H1 (cell line): ENCODE measurements at regions of chr10 and their contacts with region 1.

Region 1: GRCh38 chr10:69800109-69800508 is 1.6 kb upstream of the COL13A1 start:
- DNase-seq: peak in 1 of 2 experiments; percentile 74
- H3K4me3 ChIP-seq: no peak overlapping the region
- H3K27ac ChIP-seq: no peak overlapping the region
- H3K4me1 ChIP-seq: peaks cover 0 to 8% (median 4%) of the 10 kb centered on the region in 4 experiments; a peak in 4 of 7 replicates
- H3K27me3 ChIP-seq: peaks cover 10 to 34% (median 24%) of the 10 kb centered on the region in 4 experiments; a peak in 6 of 7 replicates
- CTCF ChIP-seq: peak; percentile 48 to 90 (median 76)
- EP300 ChIP-seq: no peak
- POLR2A ChIP-seq: no peak
- RAD21 ChIP-seq: peak; percentile 61 to 74

Region 2: DNA sequence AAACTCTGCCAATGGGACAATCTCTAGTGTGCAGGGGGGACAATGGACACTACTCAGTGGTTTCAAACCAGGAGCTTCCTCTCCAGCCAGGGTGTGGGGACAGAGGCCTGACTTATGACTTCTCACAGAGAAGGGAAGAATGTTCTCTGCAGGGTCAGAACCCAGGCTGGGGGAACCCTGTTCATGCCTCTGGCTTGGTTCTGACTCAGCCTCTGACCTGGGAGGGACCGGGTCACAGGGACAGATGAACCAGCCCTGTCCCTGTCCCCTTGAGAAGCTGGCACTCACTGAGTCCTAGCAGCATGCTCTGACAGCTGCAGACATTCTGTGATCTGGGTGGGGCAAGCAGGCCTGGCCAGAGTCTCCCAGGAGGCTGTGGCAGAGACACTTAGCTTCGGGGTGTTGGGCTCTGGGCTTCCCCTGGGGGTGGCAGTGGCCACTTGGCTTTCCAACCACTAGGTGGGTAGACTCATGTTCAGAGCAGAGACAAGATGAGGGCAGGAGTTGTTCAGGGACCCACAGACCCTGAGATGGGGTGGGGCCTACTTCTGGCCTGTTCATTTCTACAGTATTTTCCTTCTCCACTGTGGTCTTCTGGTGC is 335.2 kb before region 1 on chr10:
- CTCF ChIA-PET with region 1: no interaction called
- POLR2A ChIA-PET with region 1: no interaction called
- DNase-seq: no peak
- H3K4me3 ChIP-seq: no peak overlapping the region
- H3K27ac ChIP-seq: no peak overlapping the region
- H3K4me1 ChIP-seq: peaks cover 0 to 5% (median 0%) of the 10 kb centered on the region in 4 experiments; a peak in 3 of 7 replicates
- H3K27me3 ChIP-seq: no peaks in the 10 kb centered on the region
- CTCF ChIP-seq: peak in 1 of 3 experiments; percentile 5; a peak in 1 of 4 replicates
- EP300 ChIP-seq: no peak
- POLR2A ChIP-seq: no peak
- RAD21 ChIP-seq: no peak

Region 3: DNA sequence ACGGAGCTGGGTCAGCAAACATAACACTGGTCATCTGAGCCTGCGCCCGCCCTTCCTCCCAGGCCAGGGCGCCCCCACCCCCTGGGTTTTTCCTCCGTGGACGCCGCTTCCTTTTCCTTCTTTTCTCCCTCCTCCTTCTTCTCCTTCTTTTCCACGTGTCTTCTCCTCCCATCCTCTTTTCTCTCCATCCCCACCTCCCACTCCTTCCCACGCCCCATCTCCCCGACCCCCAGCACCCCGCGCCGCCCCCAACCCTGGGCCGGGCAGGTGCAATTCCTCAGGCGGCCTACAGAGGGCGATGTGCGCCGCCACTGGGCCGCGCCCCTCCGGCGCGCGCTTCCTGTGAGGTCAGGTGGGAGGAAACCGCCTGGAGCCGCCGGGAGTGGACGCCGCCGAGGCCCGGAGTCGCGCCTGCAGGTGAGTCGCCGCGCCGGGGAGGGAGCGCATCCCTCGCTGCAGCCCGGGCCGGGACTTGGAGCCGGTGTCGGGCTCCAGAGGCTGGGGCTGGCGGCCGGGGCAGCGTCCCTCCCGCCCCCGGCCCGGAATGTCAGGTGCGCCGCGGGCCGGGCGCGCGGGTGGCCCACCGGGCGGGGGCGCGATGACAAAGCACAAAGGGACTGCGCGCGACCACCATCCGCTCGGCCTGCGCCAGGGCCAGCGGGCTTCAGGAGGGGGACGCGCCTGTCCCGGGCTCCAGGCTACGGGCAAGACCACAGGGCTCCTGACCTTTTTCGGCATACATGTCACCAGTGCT is 170.0 kb before region 1 on chr10 and contains the start of gene FAM241B:
- CTCF ChIA-PET with region 1: no interaction called
- POLR2A ChIA-PET with region 1: no interaction called
- DNase-seq: peak in 1 of 2 experiments; percentile 95
- H3K4me3 ChIP-seq: peak within 1 kb of the TSS; percentile 53 to 81 (median 79)
- H3K27ac ChIP-seq: no peak within 1 kb of the TSS; the same call in 1 of the 2 replicates
- H3K4me1 ChIP-seq: peaks cover 0 to 7% (median 5%) of the 10 kb centered on the region in 4 experiments; a peak in 5 of 7 replicates
- H3K27me3 ChIP-seq: peaks cover 0 to 9% (median 4%) of the 10 kb centered on the region in 4 experiments; a peak in 4 of 7 replicates
- CTCF ChIP-seq: peak; percentile 62 to 90 (median 83)
- EP300 ChIP-seq: 0 out of 3 replicates have a peak, but pooled peaks of 1 of the 2 experiments have one; percentile 38
- POLR2A ChIP-seq: peak in 1 of 2 experiments; percentile 71; a peak in 2 of 3 replicates
- RAD21 ChIP-seq: peak; percentile 47 to 56
- total RNA-seq, gene FAM241B: 18.6 and 19.3 TPM in 2 replicates

Region 4: DNA sequence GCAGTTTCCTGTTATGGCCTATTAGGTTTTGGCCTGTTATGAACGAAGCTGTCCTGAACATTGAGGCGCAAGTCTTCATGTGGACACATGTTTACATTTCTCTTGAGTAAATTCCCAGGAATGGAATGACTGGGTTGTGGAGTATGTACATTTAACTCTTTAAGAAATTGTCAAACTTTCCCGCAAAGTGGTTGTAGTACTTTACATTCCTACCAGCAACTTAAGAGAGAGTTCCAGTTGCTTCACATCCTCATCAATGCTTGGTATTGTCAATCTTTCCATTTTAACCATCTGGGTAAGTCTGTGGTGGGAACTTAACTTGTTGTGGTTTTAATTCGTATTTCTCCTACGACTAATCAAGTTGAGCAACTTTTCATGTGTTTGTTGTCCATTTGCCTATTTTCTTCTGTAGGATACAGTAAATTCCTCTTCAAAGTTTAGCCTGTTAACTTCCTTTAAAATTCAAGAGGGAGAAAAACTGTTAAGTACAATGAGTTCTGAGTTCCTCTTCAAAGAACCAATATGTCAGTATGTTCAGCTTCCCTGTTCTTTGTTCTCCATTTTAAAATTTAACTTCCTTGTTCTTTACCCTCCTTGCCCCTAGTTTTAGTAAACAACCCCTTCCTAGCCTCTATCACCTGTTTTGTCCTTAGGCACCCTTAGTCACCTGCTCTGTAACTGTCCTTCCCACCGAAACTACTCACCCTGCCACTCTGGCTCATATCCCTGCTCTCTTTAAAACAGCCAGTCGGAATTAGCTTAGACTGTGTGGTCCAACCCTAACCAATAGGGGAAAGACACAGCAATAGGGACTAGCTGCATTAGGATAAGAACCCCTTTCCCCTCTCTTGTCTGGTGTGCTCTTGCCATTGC is 96.1 kb before region 1 on chr10:
- CTCF ChIA-PET with region 1: no interaction called
- POLR2A ChIA-PET with region 1: no interaction called
- DNase-seq: no peak
- H3K4me3 ChIP-seq: no peak overlapping the region
- H3K27ac ChIP-seq: no peak overlapping the region
- H3K4me1 ChIP-seq: no peaks in the 10 kb centered on the region
- H3K27me3 ChIP-seq: no peaks in the 10 kb centered on the region
- CTCF ChIP-seq: no peak
- EP300 ChIP-seq: no peak
- POLR2A ChIP-seq: no peak
- RAD21 ChIP-seq: no peak

Region 5: DNA sequence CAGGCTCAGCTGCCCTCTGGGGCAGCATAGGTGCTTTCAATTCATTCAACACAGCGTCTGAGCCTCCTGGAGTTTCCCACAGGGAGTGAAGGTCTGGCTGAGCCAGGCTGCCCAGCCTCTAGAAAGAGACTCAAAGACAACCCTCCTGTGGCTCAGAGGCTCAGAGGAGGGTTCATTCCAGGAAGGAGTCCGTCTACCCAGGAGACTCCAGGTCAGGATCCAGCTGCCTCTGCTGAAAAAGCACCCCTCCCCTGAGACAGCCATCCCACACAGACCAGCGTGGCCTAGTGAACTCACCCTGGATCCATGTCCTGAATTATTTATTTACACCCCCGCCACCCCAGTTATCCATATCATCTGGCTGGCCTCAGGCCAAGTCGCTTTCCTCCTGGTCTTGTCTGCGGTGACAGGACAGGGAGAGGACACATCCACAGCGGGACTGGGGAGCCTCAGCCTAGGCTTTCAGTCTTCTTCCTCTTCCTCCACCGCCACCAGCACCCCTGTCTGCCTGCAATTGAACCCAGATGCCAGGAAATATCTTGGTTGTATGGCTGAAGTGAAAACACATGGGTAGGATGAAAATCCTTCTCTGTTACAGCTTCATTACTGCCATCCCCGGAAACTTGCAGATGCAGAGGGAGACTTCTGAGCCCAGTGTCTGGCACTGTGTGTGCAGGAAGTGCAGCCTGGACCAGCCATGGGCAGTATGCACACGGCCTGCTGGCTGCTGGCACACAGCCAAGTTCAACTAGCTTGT is 42.4 kb before region 1 on chr10:
- CTCF ChIA-PET with region 1: interaction called, 958 read pairs
- POLR2A ChIA-PET with region 1: no interaction called
- DNase-seq: no peak
- H3K4me3 ChIP-seq: no peak overlapping the region
- H3K27ac ChIP-seq: no peak overlapping the region
- H3K4me1 ChIP-seq: no peaks in the 10 kb centered on the region
- H3K27me3 ChIP-seq: peaks cover 0 to 4% (median 0%) of the 10 kb centered on the region in 4 experiments; a peak in 2 of 7 replicates
- CTCF ChIP-seq: no peak
- EP300 ChIP-seq: no peak
- POLR2A ChIP-seq: no peak
- RAD21 ChIP-seq: no peak

Region 6: GRCh38 chr10:69813632-69814031 is 13.5 kb after region 1 on chr10:
- CTCF ChIA-PET with region 1: interaction called, 958 read pairs
- POLR2A ChIA-PET with region 1: no interaction called
- DNase-seq: no peak
- H3K4me3 ChIP-seq: no peak overlapping the region
- H3K27ac ChIP-seq: no peak overlapping the region
- H3K4me1 ChIP-seq: peaks cover 0 to 10% (median 4%) of the 10 kb centered on the region in 4 experiments; a peak in 3 of 7 replicates
- H3K27me3 ChIP-seq: no peaks in the 10 kb centered on the region
- CTCF ChIP-seq: peak in 2 of 3 experiments; percentile 19 to 20; a peak in 2 of 4 replicates
- EP300 ChIP-seq: no peak
- POLR2A ChIP-seq: no peak
- RAD21 ChIP-seq: no peak; a peak in 1 of 4 replicates

Region 7: GRCh38 chr10:69831231-69831855 is 31.2 kb after region 1 on chr10:
- CTCF ChIA-PET with region 1: interaction called, 10 read pairs
- POLR2A ChIA-PET with region 1: no interaction called
- DNase-seq: no peak
- H3K4me3 ChIP-seq: no peak overlapping the region
- H3K27ac ChIP-seq: no peak overlapping the region
- H3K4me1 ChIP-seq: peaks cover 2 to 19% (median 10%) of the 10 kb centered on the region in 4 experiments; a peak in 5 of 7 replicates
- H3K27me3 ChIP-seq: no peaks in the 10 kb centered on the region
- CTCF ChIP-seq: no peak
- EP300 ChIP-seq: no peak
- POLR2A ChIP-seq: no peak
- RAD21 ChIP-seq: no peak